ENCODE measurements at regions of chr2 and their contacts with region 1.

Region 1: DNA sequence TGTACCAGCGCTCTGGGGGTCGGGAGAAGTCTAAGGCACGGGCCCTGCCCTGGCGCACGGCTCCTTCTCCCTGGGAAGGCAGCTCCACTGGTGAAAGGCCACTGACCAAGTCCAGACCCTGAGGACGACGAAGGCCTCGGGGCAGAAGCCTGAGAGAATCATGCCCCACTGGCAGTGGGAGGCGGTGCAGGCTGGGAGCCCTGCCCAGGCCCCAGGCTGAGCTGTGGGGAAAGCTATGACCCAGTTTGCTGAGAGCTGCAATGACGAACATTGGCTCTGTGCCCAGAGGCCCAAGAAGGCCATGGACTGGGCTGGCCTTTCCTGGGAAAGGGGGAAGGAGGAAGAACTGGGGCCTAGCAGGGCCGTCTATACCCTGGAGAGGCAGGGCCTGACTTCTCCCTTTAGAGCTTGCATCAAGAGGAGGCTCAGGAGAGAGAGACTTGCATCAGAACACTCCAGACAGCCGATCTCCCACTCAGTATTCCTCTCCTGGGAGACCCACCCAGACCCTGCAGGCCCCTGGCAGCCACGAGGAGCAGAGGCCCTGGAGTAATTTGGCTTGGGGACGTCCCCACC is 32.9 kb downstream of the HS1BP3 start:
- DNase-seq: peak; percentile 99

Region 2: GRCh38 chr2:19607931-19608771 is 1009.8 kb before region 1 on chr2:
- intact Hi-C with region 1: loop called in 1 of 2 experiments (anchors 5 kb)
- DNase-seq: no peak

Region 3: DNA sequence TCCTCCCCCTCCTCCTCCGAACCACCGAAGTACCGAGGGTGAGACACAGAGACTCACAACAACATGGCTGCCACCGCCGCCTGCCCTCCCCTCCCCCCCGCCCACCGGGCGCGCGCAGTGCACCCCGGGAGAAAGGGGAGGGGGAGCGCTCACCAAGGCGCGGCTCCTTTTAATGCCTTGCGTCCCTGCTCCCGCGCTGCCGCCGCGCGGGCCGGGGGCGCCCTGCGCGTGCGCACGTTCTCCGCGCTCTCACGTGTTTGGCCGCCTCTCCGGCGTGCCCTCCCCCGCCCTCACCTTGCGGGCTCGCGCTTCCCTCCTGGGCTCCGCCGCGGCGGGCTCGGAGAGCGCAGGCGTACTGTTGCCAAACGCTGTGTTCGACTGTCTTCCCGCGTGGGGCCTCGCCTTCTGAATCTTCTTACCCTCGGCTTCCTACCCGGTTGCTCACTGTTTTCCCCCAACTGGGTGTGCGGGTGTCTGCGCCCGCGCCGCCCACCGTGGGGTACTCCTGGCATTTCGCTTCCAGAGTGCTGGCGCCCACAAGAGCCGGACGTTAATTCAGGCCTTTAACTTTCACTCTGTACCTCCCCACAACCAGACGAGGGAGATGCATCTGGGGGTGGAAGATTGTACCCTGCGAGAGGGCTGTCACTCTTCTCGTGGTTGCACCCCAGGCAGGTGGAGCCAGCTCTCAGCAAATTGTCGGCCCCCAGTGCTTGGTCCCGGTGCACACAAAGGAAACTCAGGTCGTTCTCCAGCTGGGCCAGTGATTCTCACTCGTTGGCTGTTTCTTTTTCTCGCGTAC is 267.0 kb before region 1 on chr2 and contains the start of gene PUM2:
- intact Hi-C with region 1: no loop called
- DNase-seq: peak; percentile 97
- total RNA-seq, gene PUM2: 69.2 to 81.8 TPM

Region 4: GRCh38 chr2:20543469-20544169 is 74.4 kb before region 1 on chr2:
- intact Hi-C with region 1: loop called in 1 of 2 experiments (anchors 1 kb)
- DNase-seq: no peak

Region 5: DNA sequence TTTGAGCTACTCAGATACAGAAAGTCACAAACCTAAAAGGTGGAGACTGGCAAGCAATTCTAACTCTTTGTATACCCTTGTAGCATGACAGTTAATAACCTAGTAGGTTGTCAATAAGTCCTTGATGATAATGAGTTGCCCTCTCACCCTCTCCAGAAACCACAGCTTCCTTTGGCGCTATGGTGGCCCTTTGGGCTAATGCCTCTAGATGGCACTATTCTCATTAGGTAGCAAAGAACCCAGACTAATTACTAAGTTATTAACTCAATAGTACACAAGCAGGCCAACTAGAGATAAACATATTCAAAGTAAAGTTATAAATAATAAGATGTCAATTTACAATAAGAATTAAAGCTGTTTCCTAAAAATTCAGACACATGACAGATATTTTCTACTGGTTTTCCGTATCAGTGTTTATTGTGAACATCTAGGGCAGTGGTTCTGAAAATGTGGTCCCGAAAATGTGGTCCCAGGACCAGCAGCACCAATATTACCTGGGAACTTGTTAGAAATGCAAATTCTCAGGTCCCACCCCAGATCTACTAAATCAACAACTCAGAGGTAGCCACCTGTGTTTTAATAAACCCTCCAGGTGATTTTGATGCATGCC is 163.8 kb after region 1 on chr2:
- intact Hi-C with region 1: no loop called
- DNase-seq: no peak

Region 6: GRCh38 chr2:21070341-21071257 is 452.6 kb after region 1 on chr2:
- intact Hi-C with region 1: no loop called
- DNase-seq: no peak